ENCODE measurements at regions of chr19 and their contacts with region 1.

Region 1: DNA sequence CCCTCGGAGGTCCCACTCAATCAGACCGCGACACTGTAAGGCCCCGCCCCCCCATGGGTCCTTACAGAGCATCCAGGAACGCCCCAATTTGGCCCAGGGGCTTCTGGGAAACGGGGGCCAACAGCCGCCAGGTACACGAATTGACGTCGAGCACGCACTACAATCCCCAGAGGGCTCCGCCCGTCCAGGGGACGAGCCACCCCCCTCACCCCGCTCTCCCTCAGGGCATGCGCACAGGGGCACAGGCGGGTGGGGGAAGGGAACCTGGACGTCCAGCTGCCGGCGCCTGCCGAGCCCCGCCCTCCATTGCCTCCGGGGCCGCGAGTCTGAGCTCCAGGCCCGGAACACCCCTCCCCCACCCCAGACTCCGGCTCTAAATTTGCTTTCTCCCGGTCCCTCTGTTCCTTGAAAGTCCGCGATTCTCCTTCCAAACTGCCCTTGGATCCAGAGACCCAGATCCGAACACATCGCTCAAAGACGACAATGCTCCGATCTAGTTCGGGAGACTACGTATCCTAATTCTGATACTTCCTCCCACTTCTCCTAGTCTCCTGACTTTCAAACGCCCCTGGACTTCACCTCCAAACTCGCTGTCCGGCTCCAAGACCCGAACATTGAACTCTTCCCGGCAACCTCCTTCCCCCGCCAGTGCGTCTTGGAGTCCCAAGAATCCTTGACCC is 864 bp downstream of the SERTAD3 start:
- DNase-seq: peak in 1 of 2 donors; percentile 100
- H3K4me3 ChIP-seq: peak overlapping the region; percentile 77 to 94
- H3K27ac ChIP-seq: peak overlapping the region; percentile 99
- H3K4me1 ChIP-seq: peaks cover 34% of the 10 kb centered on the region
- H3K27me3 ChIP-seq: no peaks in the 10 kb centered on the region
- CTCF ChIP-seq: no peak
- POLR2A ChIP-seq: peak in 1 of 2 donors; percentile 68

Region 2: DNA sequence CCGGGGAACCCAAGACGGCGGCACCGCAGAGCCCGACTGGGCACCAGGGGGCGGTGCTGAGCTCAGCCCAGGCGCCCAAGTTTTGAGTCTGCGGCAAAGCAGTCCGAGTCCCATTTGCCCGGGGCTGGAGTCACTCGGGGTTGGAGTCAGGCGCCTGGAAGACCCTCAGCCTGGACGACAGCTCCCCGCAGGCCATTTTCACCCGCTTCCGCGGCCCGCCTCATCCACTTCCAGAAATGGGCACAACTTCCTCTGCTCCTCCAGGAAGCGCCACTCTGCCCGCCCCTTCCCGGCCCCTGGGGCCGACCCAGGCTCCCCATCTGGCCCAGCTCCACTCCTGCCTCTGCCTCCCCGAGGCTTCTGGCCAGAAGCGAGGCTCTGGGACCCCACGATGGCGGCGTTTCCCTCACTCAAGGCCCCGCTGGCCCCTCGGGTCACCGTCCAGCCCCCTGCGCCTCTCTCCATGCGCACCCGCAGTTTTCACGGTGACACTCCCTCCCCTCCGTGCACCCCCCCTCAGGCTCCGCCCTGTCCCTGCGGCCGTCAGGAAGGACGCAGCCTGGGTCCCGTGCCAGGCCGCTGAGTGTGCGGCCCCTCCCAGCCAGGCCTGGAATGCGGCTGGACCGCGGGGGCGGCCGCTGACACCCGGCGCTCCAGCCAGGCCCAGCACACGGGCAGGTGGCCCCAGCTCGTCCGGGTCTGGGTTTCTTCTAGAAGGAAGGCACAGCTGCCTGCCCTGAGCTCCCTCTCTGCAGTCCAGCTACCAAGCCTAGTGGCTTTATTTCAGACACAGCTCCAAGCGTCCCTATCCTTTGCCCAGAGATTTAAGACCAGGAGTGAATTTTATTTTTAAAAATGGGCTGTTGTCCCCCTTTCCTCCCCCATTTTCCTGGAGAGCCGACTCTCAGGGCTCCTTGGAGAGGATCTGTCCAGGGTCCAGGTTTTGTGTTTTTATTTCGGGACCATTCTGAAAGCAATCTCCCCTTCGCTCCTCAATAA is 22.2 kb before region 1 on chr19:
- intact Hi-C with region 1: loop called (anchors 2 kb)
- DNase-seq: peak in 1 of 2 donors; percentile 94
- H3K4me3 ChIP-seq: peak overlapping the region; percentile 51 to 74
- H3K27ac ChIP-seq: peak overlapping the region; percentile 93
- H3K4me1 ChIP-seq: peaks cover 35% of the 10 kb centered on the region
- H3K27me3 ChIP-seq: no peaks in the 10 kb centered on the region
- CTCF ChIP-seq: peak; percentile 92 to 94 (median 94)
- POLR2A ChIP-seq: peak in 1 of 2 donors; percentile 68